Left colon (tissue), 2 donors: ENCODE measurements at regions of chr3 and their contacts with region 1.

Region 1: DNA sequence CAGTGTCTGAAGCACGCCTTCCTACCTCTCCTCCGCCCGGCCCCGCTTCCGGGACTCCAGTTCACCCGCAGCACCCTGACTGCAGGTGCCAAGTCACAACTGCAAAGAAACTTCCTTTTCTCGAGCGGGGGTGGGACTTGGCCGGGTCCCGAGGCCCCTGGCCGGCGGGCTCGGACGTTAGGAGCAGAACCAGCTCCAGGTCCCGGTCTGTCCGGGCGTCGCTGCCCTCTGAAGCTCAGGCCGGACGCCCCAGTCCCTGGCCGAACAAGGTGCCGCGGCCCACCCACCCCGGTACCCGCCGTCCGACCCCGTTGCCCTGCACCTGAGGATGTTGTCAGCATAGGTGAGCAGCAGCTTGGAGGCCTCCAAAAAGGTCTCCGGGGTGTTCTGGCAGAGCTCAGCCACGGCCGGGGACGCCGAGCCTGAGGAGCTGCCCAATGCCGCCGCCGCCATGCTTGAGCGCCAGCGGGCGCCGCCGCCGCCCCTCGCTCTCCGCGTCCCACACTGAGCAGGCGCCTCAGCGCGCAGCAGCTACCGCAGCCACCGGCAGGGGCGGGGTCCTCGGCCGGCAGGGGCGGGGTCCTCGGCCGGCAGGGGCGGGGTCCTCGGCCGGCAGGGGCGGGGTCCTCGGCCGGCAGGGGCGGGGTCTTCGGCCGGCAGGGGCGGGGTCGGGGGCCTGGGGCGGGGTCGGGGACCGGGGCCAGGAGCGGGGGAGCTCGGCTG is at the start of gene NGLY1:
- DNase-seq: peak; percentile 81 to 90
- ATAC-seq: peak; percentile 93
- total RNA-seq, gene NGLY1: 42.2 to 45.0 TPM

Region 2: GRCh38 chr3:25556447-25556846 is 226.7 kb before region 1 on chr3:
- intact Hi-C with region 1: no loop called
- DNase-seq: no peak
- ATAC-seq: no peak

Region 3: GRCh38 chr3:25633919-25634318 is 149.2 kb before region 1 on chr3:
- intact Hi-C with region 1: no loop called
- DNase-seq: no peak
- ATAC-seq: no peak

Region 4: DNA sequence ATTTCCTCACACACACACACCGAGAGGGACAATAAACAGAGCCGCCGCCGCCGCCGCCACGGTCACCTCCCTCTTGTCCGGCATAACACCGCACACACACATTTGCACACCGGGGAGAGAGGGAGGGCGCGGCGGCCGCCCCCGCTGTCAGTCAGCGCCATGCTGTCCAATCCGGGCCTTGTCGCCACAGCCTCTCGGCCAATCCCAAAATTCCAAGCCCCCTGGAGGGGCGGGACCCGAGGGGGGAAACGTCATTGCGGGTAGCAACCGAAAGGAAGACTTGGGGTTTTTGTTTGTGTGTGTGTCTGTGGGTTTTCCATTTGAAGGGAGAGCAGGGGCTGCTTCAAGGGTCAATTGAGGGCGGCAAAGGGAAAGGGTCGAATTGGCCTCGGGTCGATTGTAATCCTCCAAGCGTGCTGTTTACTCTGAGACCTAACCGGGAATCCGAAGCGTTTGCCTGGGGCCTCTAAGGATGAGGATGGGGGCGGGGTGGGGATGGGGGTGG is 118.2 kb before region 1 on chr3 and contains the start of gene TOP2B:
- intact Hi-C with region 1: loop called in 1 of 2 experiments (anchors 5 kb)
- DNase-seq: peak; percentile 95 to 97
- ATAC-seq: peak; percentile 95
- total RNA-seq, gene TOP2B: 78.1 to 84.1 TPM